CD14-positive monocyte (primary cell): ENCODE measurements at regions of chr3 and their contacts with region 1.

Region 1: GRCh38 chr3:42096796-42097565 is 5.8 kb downstream of the TRAK1 start:
- DNase-seq: no peak
- H3K4me3 ChIP-seq: no peak overlapping the region
- H3K4me3 Mint-ChIP-seq: no peak overlapping the region
- H3K27ac ChIP-seq: no peak overlapping the region
- H3K27ac Mint-ChIP-seq: no peak overlapping the region
- H3K4me1 ChIP-seq: peaks cover 13 to 14% of the 10 kb centered on the region in 2 donors
- H3K4me1 Mint-ChIP-seq: peaks cover 18% of the 10 kb centered on the region
- H3K27me3 ChIP-seq: no peaks in the 10 kb centered on the region
- H3K27me3 Mint-ChIP-seq: peaks cover 0 to 4% (median 4%) of the 10 kb centered on the region in 3 donors
- CTCF ChIP-seq: no peak

Region 2: GRCh38 chr3:41900265-41900664 is 196.7 kb before region 1 on chr3:
- intact Hi-C with region 1: loop called (anchors 5 to 10 kb)
- DNase-seq: peak in 2 of 3 donors; percentile 10 to 21
- H3K4me3 ChIP-seq: no peak overlapping the region
- H3K4me3 Mint-ChIP-seq: no peak overlapping the region
- H3K27ac ChIP-seq: no peak overlapping the region
- H3K27ac Mint-ChIP-seq: no peak overlapping the region
- H3K4me1 ChIP-seq: no peaks in the 10 kb centered on the region
- H3K4me1 Mint-ChIP-seq: peaks cover 1% of the 10 kb centered on the region
- H3K27me3 ChIP-seq: no peaks in the 10 kb centered on the region
- H3K27me3 Mint-ChIP-seq: no peaks in the 10 kb centered on the region
- CTCF ChIP-seq: no peak